Dendritic cell treated with granulocyte-macrophage colony-stimulating factor and Interleukin-4, amounts not matched to agents 40 ng/mL and 50 ng/mL, for 4 days (primary cell): ENCODE measurements at regions of chr4 and their contacts with region 1.

Region 1: DNA sequence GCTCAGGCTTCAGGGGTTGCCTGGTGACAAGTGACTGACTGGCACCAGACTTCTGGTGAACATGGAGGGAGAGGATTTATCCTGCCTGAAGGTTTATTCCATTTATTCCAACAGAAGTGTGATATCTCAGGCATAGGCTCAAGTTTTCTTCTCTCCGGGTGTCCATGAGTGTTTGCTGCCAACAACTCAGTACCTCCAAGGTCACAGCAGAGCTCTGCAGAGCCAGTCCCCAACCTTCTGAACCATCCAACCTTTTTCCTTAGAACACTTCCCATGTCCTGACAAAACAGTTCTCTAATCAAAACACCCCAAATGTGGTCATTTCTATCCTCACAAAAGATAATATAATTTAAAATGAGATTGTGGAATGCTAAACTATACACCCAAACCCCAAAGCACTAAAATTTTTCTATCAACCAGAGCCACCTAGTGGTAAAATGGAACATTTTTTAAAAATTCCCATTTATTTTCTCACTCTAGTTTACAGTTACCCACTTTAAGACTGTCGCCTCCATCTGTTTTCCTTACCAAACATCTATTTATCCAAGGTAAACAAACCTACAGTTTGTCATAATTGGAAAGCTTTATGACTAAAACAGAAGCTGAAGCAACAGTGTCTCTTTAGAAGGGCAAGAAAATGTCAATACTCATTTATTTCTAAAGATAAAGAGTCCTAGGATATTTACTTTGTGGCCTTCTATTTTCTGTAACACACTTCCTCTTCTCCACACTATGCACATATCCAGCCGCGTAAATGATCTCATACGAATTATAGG is 39.6 kb downstream of the TMEM154 start:
- H3K4me3 Mint-ChIP-seq: no peak overlapping the region
- H3K27ac Mint-ChIP-seq: peak overlapping the region; percentile 24
- H3K4me1 Mint-ChIP-seq: peaks cover 68% of the 10 kb centered on the region
- H3K27me3 Mint-ChIP-seq: no peaks in the 10 kb centered on the region

Region 2: DNA sequence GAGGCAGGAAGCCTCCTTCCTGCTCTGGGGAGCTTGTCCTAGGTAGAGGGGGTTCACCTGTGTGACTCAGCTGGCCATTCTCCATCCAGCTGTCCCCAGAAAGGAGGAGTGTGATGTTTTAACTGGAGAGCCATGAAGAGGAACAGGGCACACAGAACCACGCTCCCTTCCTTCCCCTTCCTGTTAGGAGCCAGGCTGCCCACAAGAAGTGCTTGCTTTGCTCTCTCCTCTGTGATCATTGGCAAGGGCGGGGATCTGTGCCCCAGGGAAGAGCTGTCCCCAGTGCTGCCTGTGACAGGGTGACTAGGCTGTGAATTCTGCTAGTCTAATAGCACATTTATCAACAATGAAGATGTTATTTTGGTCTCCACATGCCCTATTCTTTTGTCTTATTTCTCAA is 709.9 kb before region 1 on chr4:
- intact Hi-C with region 1: no loop called
- H3K4me3 Mint-ChIP-seq: no peak overlapping the region
- H3K27ac Mint-ChIP-seq: no peak overlapping the region
- H3K4me1 Mint-ChIP-seq: peaks cover 9% of the 10 kb centered on the region
- H3K27me3 Mint-ChIP-seq: peaks cover 5% of the 10 kb centered on the region

Region 3: DNA sequence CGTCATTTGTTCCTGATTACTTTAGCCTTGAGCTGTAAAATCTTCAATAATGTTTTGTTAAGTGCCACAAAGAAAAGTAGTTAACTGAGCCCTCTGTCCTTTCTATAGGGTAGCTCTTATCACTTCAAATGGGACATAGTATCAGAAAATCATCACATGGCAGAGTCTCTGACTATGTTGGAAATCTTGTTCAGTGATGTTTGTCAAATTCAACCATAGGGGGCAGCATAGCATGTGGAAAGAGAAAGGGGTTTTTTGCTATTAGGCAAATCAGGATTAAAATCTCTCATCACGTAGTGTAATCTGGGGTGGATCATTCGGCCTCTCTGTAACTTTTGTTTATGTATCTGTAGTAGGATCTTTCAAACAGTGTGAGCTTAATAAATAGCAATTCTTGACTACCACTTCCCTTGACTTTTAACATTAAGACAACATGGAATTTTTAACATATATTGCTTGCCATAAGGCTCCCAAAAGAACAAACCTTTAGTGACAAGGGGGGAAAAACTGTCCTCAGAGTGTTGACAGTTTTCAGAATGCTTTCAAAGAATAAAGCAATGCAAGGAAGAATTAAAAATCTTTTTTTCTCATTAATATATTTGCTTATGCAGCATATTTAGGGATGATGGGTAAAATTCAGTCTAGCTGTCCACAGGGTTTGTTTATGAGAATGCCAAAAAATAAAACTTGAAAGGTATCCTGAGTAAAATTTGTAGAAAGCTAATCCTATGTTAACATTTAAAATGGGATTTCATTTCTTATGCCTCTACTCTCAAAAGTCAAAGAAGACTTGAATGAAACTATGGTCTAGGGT is 231.5 kb before region 1 on chr4:
- intact Hi-C with region 1: loop called (anchors 5 kb)
- H3K4me3 Mint-ChIP-seq: no peak overlapping the region
- H3K27ac Mint-ChIP-seq: no peak overlapping the region
- H3K4me1 Mint-ChIP-seq: no peaks in the 10 kb centered on the region
- H3K27me3 Mint-ChIP-seq: no peaks in the 10 kb centered on the region

Region 4: DNA sequence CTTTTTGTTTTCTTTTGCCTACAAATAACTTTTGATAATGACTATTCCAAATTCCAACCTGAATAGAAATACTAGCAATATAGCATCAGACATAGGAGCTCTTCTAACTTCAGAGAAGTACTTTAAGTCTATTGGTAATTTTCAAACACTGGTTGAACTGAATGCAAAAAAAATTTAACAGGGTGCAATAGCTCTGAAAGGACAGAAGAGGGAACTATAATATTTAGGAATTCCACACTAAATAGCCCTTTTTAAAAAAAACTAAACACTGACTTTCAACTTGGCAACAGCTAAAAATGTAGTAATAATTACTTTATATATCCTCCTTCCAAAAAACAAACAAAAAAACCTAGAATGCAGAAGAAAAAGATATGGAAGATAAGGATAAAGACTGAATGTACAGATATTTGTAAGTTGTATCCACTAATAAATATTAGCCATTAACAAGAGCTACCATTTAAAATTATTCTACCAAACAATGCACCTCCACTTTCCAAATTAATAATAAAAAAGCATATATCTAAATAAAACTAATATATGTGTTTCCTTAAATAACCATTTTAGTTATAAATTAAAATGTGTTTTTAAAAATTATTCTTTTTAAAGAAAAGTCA is 185.7 kb before region 1 on chr4:
- intact Hi-C with region 1: loop called (anchors 2 kb)
- H3K4me3 Mint-ChIP-seq: no peak overlapping the region
- H3K27ac Mint-ChIP-seq: no peak overlapping the region
- H3K4me1 Mint-ChIP-seq: peaks cover 28% of the 10 kb centered on the region
- H3K27me3 Mint-ChIP-seq: no peaks in the 10 kb centered on the region

Region 5: GRCh38 chr4:152500800-152501434 is 139.3 kb before region 1 on chr4:
- intact Hi-C with region 1: loop called (anchors 1 kb)
- H3K4me3 Mint-ChIP-seq: no peak overlapping the region
- H3K27ac Mint-ChIP-seq: no peak overlapping the region
- H3K4me1 Mint-ChIP-seq: peaks cover 20% of the 10 kb centered on the region
- H3K27me3 Mint-ChIP-seq: no peaks in the 10 kb centered on the region

Region 6: DNA sequence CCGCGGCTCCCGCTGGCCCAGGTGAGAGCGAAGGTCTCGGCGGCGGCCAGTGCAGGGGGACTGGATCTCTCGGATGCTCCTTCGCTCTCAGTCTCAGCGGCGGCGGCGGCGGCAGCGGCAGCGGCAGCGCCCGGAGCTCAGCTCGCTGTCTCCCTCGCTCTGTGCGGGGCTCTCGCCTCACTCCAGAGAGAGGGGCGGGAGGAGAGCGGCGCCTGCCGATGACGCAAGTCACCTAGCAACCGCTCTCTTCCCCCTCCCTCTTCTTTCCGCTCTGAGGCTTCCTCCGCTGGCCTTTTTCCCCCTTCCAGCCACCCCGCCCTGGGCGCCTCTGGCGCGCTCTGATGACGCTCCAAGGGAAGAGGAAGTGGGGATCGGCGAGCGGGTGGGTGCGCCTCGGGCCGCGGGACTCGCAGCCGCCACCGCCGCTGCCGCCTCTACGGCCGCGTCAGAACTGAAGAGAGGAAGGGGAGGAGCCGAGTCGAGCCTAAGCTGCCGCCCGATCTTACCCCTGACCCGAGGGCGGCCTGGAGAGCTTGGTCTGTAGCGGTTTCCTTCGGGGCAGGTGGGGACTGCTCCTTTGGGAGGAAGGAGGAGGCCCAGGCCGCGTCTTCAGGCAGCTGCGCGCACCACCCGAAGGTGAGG is 104.2 kb before region 1 on chr4 and contains the start of gene FBXW7:
- intact Hi-C with region 1: loop called (anchors 2 kb)
- H3K4me3 Mint-ChIP-seq: peak within 1 kb of the TSS; percentile 100
- H3K27ac Mint-ChIP-seq: peak within 1 kb of the TSS; percentile 92
- H3K4me1 Mint-ChIP-seq: peaks cover 56% of the 10 kb centered on the region
- H3K27me3 Mint-ChIP-seq: no peaks in the 10 kb centered on the region

Region 7: DNA sequence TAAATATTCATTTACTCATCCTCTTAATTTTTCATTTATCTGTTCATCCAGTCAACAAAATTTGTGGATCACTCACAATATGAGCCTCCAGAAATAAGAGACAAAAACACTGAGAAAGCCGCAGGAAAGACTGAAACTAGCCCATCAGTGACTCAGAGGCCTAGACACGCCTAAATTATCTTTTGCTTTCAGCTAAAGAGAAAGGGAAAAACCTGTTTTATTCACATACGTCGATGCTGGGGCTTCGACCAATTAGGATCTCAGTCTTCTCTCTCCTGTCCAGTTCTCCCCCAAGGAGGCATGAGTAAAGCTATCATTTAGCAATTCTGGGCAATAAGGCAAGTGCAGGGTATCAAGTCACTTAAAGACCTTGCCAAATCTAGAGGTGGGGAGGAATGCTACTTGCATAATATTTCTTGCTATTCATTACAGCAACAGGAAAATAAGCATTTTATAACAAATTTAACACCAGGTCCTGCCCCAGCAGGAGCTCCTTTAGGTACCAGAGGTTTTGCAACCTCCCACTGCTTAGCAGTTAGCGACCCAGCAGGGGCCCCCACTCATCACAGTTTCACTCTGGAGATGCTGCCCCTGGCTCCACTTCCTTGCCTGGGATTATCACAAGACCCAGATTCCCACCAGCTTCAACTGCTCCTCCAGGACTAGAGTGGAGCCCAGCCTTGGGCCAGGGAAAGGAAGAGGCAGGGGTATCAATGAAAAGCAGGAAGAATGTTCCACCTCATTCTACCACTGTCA is 69.6 kb after region 1 on chr4:
- intact Hi-C with region 1: loop called (anchors 10 kb)
- H3K4me3 Mint-ChIP-seq: no peak overlapping the region
- H3K27ac Mint-ChIP-seq: no peak overlapping the region
- H3K4me1 Mint-ChIP-seq: peaks cover 9% of the 10 kb centered on the region
- H3K27me3 Mint-ChIP-seq: peaks cover 3% of the 10 kb centered on the region

Region 8: DNA sequence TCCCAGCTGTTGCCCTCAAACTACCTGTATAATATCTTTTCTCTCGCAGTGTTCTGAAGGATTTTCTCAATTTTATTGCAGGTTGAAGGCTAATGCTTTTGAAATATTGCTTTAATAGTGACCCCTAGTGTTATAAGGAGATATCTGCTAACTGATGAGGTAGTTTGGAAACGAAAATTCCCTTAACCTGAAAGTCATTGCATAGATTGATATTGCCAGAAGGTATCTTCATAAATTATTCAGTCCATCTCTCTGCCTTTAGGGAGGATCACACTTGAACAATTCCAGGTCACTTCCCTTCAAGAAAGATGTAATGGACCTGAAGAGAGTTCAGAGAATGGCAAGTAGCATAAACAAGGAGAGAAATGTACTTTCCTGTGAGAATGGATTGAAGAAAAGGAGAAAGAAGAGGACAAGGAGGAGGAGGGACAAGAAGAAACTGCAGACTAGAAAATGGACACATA is 95.2 kb after region 1 on chr4:
- intact Hi-C with region 1: loop called (anchors 10 kb)
- H3K4me3 Mint-ChIP-seq: no peak overlapping the region
- H3K27ac Mint-ChIP-seq: no peak overlapping the region
- H3K4me1 Mint-ChIP-seq: peaks cover 19% of the 10 kb centered on the region
- H3K27me3 Mint-ChIP-seq: peaks cover 3% of the 10 kb centered on the region